ENCODE measurements at regions of chr1 and their contacts with region 1.

Region 1: GRCh38 chr1:31372961-31373896 is at the start of gene FABP3:
- DNase-seq: peak; percentile 84 to 95
- ATAC-seq: peak; percentile 66 to 73
- H3K4me3 ChIP-seq: peak within 1 kb of the TSS; percentile 58 to 72 (median 70)
- H3K27ac ChIP-seq: peak within 1 kb of the TSS; percentile 99 to 100 (median 99)
- H3K4me1 ChIP-seq: peaks cover 46 to 63% of the 10 kb centered on the region in 2 donors
- H3K27me3 ChIP-seq: no peaks in the 10 kb centered on the region
- CTCF ChIP-seq: peak in 1 of 5 experiments; percentile 25
- POLR2A ChIP-seq: peak; percentile 91 to 94
- total RNA-seq, gene FABP3: 886 to 2,424 (median 1,240) TPM

Region 2: DNA sequence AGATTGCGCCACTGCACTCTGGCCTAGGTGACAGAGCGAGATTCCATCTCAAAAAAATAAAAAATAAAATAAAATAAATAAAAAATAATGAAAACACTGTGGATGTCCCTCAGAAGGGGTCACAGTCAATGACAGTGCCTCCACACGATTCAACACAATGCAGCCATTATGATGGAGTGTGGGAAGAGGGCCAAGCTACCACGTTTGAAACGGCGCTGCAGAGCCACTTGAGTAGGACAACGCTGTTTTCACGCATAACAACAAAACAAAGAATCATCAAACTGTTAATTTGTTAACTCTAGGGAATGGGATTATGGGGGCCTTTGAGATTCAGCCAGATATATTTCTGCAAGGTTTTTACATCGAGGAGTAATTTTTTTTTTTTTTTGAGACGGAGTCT is 170.0 kb before region 1 on chr1:
- in situ Hi-C with region 1: no loop called
- intact Hi-C with region 1: no loop called
- DNase-seq: no peak
- ATAC-seq: no peak
- H3K4me3 ChIP-seq: no peak overlapping the region
- H3K27ac ChIP-seq: no peak overlapping the region
- H3K4me1 ChIP-seq: no peaks in the 10 kb centered on the region
- H3K27me3 ChIP-seq: no peaks in the 10 kb centered on the region
- CTCF ChIP-seq: no peak
- POLR2A ChIP-seq: no peak

Region 3: GRCh38 chr1:31413405-31414125 is 40.3 kb after region 1 on chr1:
- in situ Hi-C with region 1: no loop called
- intact Hi-C with region 1: loop called (anchors 2 kb)
- DNase-seq: peak; percentile 81 to 90
- ATAC-seq: peak; percentile 76 to 78
- H3K4me3 ChIP-seq: peak overlapping the region; percentile 74 to 95 (median 90)
- H3K27ac ChIP-seq: peak overlapping the region; percentile 93 to 99 (median 98)
- H3K4me1 ChIP-seq: peaks cover 5 to 15% of the 10 kb centered on the region in 2 donors
- H3K27me3 ChIP-seq: no peaks in the 10 kb centered on the region
- CTCF ChIP-seq: no peak
- POLR2A ChIP-seq: peak; percentile 60 to 69

Region 4: DNA sequence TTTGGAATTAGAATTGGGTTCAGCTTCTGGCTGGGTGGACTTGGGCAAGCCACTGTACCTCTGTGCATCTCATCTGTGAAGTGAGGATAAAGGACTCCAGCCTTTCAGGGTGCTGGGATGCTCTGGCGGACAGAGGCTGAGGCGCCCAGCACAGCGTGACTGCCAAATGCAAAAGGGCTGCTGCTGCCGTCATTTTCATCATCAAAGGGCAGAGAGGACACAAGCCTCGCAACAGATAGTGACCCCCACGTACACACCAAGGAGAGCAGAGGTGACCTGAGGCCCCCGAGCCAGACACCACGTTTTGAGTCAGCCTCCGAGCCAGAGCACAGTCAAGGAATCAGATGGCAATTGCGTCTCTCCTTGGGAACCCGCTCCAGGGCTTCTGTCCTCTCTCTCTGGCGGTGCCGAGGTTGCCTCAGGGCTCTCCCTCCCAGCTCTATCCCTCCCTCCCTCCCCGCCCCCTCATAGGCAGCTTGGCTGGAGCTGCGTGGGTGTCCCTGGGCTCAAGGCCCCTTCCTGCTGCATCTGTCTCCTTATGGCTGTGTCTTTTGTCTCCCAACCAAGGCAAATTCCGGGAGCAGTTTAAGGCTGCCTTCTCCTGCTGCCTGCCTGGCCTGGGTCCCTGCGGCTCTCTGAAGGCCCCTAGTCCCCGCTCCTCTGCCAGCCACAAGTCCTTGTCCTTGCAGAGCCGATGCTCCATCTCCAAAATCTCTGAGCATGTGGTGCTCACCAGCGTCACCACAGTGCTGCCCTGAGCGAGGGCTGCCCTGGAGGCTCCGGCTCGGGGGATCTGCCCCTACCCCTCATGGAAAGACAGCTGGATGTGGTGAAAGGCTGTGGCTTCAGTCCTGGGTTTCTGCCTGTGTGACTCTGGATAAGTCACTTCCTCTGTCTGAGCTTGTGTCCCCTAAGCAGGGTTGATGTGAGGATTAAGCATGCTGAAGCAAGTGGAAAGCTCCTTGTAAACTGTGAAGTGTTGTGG is 253.3 kb after region 1 on chr1:
- in situ Hi-C with region 1: no loop called
- intact Hi-C with region 1: loop called (anchors 2 kb)
- DNase-seq: peak; percentile 49 to 81
- ATAC-seq: peak; percentile 35 to 42
- H3K4me3 ChIP-seq: no peak overlapping the region
- H3K27ac ChIP-seq: peak overlapping the region; percentile 89 to 99 (median 97)
- H3K4me1 ChIP-seq: peaks cover 39 to 47% of the 10 kb centered on the region in 2 donors
- H3K27me3 ChIP-seq: no peaks in the 10 kb centered on the region
- CTCF ChIP-seq: no peak
- POLR2A ChIP-seq: peak in 1 of 2 donors; percentile 8

Region 5: DNA sequence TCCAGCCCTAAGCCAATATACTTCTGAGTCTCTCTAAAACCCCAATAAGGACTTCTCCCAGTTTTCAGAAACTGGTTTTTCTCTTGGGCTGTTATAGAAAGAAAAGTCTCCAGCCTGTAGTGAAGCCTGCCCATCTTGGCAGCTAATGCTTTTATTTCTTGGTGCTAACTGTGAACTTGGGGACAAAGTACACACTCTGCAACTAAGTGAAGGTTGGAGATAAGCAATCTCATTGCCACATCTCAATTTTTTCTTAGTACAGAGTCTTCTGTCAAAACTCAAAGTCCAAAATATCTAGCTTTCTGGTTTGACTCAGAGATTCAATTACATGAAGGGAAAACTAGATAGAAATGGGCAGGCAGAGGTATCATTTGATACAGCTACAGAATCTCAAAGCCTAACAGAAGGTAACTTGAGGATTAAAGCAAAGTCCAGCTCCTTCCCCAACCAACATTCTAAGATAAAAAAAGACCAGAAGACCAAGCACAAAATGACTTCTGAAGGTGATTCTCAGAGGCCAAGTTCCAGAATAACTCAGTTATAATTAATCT is 1649.5 kb after region 1 on chr1:
- in situ Hi-C with region 1: no loop called
- intact Hi-C with region 1: loop called (anchors 10 kb)
- DNase-seq: no peak
- ATAC-seq: peak in 1 of 2 donors; percentile 34
- H3K4me3 ChIP-seq: no peak overlapping the region
- H3K27ac ChIP-seq: peak overlapping the region; percentile 71 to 98 (median 91)
- H3K4me1 ChIP-seq: peaks cover 49 to 59% of the 10 kb centered on the region in 2 donors
- H3K27me3 ChIP-seq: no peaks in the 10 kb centered on the region
- CTCF ChIP-seq: no peak
- POLR2A ChIP-seq: no peak